ENCODE measurements at regions of chr3 and their contacts with region 1.

Region 1: DNA sequence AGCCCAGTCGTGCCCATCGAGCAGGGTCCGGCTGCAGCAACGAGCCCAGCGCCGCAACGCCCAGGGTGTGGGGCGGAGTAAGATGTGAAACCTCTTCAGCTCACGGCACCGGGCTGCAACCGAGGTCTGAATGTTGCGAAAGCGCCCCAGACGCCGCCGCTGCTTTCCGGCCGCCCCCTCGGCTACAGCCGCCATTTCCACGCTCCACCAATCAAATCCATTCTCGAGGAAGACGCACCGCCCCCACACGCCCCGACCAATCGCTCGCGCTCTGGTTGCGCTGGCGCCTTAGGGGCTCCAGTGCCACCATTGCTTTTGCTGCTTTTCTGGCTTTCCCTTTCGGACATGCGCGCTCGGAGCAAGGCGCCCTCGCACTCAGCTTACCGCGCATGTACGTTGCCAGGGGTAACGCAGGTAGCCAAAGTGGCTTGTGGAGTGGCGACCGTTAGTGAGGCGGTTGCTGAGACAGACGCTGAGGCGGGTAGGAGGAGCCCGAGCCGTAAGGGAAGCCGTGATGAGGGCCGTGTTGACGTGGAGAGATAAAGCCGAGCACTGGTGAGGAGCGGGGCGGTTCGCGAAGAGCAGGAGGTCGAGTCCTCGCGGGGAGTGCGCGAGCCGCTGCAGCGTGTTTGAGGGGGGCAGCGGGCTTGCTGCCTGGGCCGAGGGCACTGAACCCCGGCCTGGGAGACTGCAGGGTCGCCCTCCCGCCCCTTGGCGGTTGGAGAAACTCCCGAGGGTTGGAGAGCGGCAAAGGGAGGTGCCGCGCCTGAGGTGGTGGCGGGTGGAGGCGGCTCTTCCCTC is at the starts of genes IFT122 and MBD4:
- DNase-seq: peak; percentile 99
- H3K4me3 ChIP-seq: peak within 1 kb of the TSS; percentile 70 to 94 (median 89)
- H3K27ac ChIP-seq: peak within 1 kb of the TSS; percentile 85 to 93 (median 88)
- H3K4me1 ChIP-seq: peaks cover 0 to 55% (median 38%) of the 10 kb centered on the region in 4 donors
- H3K27me3 ChIP-seq: no peaks in the 10 kb centered on the region
- CTCF ChIP-seq: no peak
- EP300 ChIP-seq: no peak
- POLR2A ChIP-seq: peak; percentile 72 to 77
- total RNA-seq, gene IFT122: 15.8 to 21.4 (median 17.8) TPM
- total RNA-seq, gene MBD4: 13.3 to 18.4 (median 16.6) TPM

Region 2: GRCh38 chr3:129195731-129196256 is 244.2 kb before region 1 on chr3:
- intact Hi-C with region 1: no loop called
- DNase-seq: peak; percentile 88
- H3K4me3 ChIP-seq: peak overlapping the region in 3 of 4 donors; percentile 16 to 22 (median 20)
- H3K27ac ChIP-seq: peak overlapping the region; percentile 73 to 88 (median 82)
- H3K4me1 ChIP-seq: peaks cover 0 to 31% (median 28%) of the 10 kb centered on the region in 4 donors
- H3K27me3 ChIP-seq: no peaks in the 10 kb centered on the region
- CTCF ChIP-seq: no peak
- EP300 ChIP-seq: peak in 2 of 4 donors; percentile 4 to 43
- POLR2A ChIP-seq: no peak

Region 3: GRCh38 chr3:129352650-129353588 is 87.1 kb before region 1 on chr3:
- intact Hi-C with region 1: no loop called
- DNase-seq: no peak
- H3K4me3 ChIP-seq: no peak overlapping the region
- H3K27ac ChIP-seq: peak overlapping the region in 1 of 4 donors; percentile 31
- H3K4me1 ChIP-seq: no peaks in the 10 kb centered on the region
- H3K27me3 ChIP-seq: no peaks in the 10 kb centered on the region
- CTCF ChIP-seq: no peak
- EP300 ChIP-seq: no peak
- POLR2A ChIP-seq: no peak

Region 4: GRCh38 chr3:129399145-129399894 is 40.7 kb before region 1 on chr3:
- intact Hi-C with region 1: loop called (anchors 2 kb)
- DNase-seq: peak; percentile 93
- H3K4me3 ChIP-seq: peak overlapping the region; percentile 75 to 88 (median 86)
- H3K27ac ChIP-seq: peak overlapping the region; percentile 80 to 88 (median 86)
- H3K4me1 ChIP-seq: peaks cover 0 to 23% (median 17%) of the 10 kb centered on the region in 4 donors
- H3K27me3 ChIP-seq: no peaks in the 10 kb centered on the region
- CTCF ChIP-seq: peak; percentile 70 to 79 (median 74)
- EP300 ChIP-seq: no peak
- POLR2A ChIP-seq: no peak

Region 5: GRCh38 chr3:129534428-129535027 is 94.5 kb after region 1 on chr3:
- intact Hi-C with region 1: no loop called
- DNase-seq: no peak
- H3K4me3 ChIP-seq: no peak overlapping the region
- H3K27ac ChIP-seq: no peak overlapping the region
- H3K4me1 ChIP-seq: no peaks in the 10 kb centered on the region
- H3K27me3 ChIP-seq: no peaks in the 10 kb centered on the region
- CTCF ChIP-seq: no peak
- EP300 ChIP-seq: no peak
- POLR2A ChIP-seq: no peak